AG04449 (cell line): ENCODE measurements at regions of chr14 and their contacts with region 1.

Region 1: GRCh38 chr14:100383727-100384158 is 60.6 kb downstream of the SLC25A47 start:
- DNase-seq: no peak
- H3K4me3 ChIP-seq: no peak overlapping the region
- CTCF ChIP-seq: peak; percentile 93

Region 2: DNA sequence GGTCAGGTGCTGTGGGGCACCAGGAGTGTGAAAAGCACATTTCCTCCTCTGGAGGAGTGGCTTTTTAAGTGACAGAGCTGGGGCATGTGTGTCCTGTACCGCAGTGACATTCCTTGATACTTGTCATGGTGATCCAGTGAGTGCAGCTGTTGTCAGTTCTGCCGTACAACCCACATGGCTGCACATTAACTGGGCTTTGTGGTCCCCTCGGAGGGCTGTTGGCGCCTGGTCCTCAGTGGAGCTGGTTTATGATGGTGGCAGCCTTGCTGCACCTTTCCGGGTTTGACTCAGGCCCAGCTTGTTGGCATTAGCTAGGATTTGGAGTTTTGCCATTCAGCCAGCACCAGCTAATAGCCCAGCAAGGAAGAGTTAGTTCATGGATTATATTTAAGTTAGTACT is 16.4 kb after region 1 on chr14:
- CTCF ChIA-PET with region 1: interaction called, 119 read pairs
- POLR2A ChIA-PET with region 1: interaction called, 3 read pairs
- DNase-seq: no peak
- H3K4me3 ChIP-seq: no peak overlapping the region
- CTCF ChIP-seq: no peak

Region 3: GRCh38 chr14:100417466-100417865 is 33.7 kb after region 1 on chr14:
- CTCF ChIA-PET with region 1: interaction called, 130 read pairs
- POLR2A ChIA-PET with region 1: no interaction called
- DNase-seq: peak; percentile 77
- H3K4me3 ChIP-seq: no peak overlapping the region
- CTCF ChIP-seq: peak; percentile 94

Region 4: GRCh38 chr14:100476012-100476822 is 92.5 kb after region 1 on chr14:
- CTCF ChIA-PET with region 1: interaction called, 10 read pairs
- POLR2A ChIA-PET with region 1: no interaction called
- DNase-seq: peak; percentile 99
- H3K4me3 ChIP-seq: peak overlapping the region; percentile 12; the same call in 1 of the 2 replicates
- CTCF ChIP-seq: no peak

Region 5: DNA sequence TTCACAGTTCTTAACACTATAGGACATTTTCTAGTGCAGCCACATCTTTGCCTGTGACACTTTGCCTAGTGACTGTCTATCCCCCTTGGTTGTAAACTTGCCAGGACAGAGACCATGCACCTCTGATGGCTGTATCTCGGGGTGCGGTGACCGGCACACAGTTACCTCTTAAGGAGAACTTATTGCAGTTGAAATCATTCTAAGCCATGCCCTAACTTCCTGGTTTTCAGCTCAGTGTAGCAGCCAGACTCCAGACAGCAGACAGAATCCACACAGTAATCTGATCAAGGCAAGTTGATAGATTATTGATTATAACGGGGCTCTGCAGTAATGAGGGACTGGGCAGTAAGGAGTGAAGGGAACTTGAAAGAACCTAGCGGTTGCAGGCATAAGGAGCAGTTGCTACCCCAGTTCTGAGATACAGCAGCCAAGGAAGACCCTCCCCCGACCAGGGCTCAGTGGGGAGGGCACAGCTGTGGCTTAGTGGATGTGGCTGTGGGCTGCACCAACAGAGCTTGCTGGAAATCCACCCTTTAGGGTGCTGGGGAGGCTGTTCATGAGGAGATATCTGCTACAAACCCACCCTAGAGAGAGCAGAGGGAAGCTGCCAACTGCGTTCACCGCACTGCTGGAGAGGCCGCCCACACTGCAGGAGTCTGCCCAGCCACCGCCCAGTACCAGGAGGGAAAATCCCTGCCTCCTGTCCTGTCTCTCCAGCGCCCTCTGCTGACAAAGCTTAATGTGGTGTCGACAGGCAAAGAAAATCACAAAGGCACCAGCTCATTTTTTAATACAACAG is 261.6 kb after region 1 on chr14:
- CTCF ChIA-PET with region 1: interaction called, 497 read pairs
- POLR2A ChIA-PET with region 1: no interaction called
- DNase-seq: no peak
- H3K4me3 ChIP-seq: no peak overlapping the region
- CTCF ChIP-seq: peak; percentile 87

Region 6: DNA sequence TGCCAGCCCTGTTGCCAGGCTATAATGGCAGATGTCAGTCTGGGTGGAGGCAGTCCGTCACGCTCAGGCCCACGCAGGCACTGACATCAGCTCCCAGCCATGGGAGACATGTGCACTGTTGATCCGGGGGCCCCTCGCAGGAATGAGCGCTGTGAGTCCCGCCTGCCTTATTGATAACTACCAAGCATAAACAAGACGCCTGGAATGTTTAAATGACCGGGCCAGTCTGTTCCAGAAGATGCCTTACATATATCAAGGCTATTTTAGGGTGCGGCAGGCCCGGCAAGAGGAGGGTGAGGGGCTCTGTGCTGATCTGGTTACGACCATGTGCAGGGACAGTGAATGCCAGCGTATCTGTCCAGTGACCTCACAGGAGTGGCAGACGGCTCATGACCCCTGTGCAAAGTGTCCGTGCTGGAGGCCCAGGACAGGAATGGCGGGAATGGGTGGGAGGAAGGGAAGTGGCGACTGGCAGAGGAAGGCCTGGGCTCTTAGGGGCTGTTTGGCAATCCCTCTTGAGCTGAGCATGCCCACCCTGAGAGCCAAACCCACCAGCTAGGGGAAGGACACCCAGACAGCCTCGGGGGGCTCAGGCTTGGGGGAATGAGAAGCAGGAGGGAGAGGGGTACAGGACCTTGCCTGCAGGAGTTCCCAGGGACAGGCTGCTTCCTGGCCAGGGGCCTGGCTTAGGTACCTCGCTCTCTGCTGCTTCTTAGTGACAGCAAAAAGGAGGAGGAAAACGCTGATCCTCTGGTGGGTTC is 392.3 kb after region 1 on chr14:
- CTCF ChIA-PET with region 1: no interaction called
- POLR2A ChIA-PET with region 1: no interaction called
- DNase-seq: no peak
- H3K4me3 ChIP-seq: no peak overlapping the region
- CTCF ChIP-seq: no peak

Region 7: GRCh38 chr14:101235335-101236103 is 851.8 kb after region 1 on chr14:
- CTCF ChIA-PET with region 1: interaction called, 12 read pairs
- POLR2A ChIA-PET with region 1: no interaction called
- DNase-seq: no peak
- H3K4me3 ChIP-seq: no peak overlapping the region
- CTCF ChIP-seq: peak; percentile 92

Region 8: DNA sequence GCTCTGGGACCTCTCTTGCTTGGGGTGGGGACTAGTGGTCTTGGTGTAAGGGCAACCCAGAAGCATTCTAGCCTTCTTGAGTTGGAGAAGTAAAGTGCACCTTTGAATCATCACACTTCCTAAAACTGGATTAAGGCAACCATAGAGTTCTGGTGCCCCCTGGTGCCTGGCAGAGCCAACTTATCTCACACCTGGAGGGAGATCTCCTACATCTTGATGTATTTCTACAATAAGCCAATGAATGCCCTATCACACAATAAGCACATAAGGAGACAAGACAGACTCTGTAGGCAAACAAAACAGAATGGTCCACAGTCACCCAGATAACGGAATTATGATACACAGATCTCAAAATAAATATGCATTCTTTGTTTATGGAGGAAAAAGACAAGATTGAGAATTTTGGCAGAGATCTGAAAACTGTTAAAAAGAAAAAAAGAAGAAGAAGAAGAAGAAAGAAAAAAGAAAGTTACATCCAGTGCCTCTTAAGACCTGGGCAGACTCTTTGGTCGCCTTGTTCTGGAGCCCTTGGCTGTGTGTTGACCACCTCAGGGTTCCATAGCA is 1281.9 kb after region 1 on chr14:
- CTCF ChIA-PET with region 1: interaction called, 15 read pairs
- POLR2A ChIA-PET with region 1: no interaction called
- DNase-seq: no peak
- H3K4me3 ChIP-seq: no peak overlapping the region
- CTCF ChIP-seq: peak; percentile 37